ENCODE measurements at regions of chrX and their contacts with region 1.

Region 1: GRCh38 chrX:12974796-12975669 is at the start of gene TMSB4X:
- DNase-seq: peak; percentile 89
- ATAC-seq: peak; percentile 59
- H3K4me3 ChIP-seq: peak within 1 kb of the TSS; percentile 85 to 93 (median 89)
- H3K4me3 Mint-ChIP-seq: peak within 1 kb of the TSS; percentile 99
- H3K27ac ChIP-seq: peak within 1 kb of the TSS; percentile 84 to 86
- H3K27ac Mint-ChIP-seq: peak within 1 kb of the TSS; percentile 98
- H3K4me1 ChIP-seq: peaks cover 49 to 52% of the 10 kb centered on the region in 2 donors
- H3K4me1 Mint-ChIP-seq: peaks cover 60% of the 10 kb centered on the region
- H3K27me3 ChIP-seq: no peaks in the 10 kb centered on the region
- H3K27me3 Mint-ChIP-seq: no peaks in the 10 kb centered on the region
- CTCF ChIP-seq: no peak
- total RNA-seq, gene TMSB4X: 2,468 and 2,550 TPM in 2 replicates

Region 2: GRCh38 chrX:12955882-12956703 is 18.9 kb before region 1 on chrX:
- CTCF ChIA-PET with region 1: interaction called, 214 read pairs
- POLR2A ChIA-PET with region 1: interaction called, 136 read pairs
- intact Hi-C with region 1: loop called (anchors 1 kb)
- DNase-seq: peak; percentile 78
- ATAC-seq: peak; percentile 46
- H3K4me3 ChIP-seq: peak overlapping the region; percentile 33 to 52 (median 38)
- H3K4me3 Mint-ChIP-seq: peak overlapping the region; percentile 90
- H3K27ac ChIP-seq: peak overlapping the region; percentile 95
- H3K27ac Mint-ChIP-seq: peak overlapping the region; percentile 98
- H3K4me1 ChIP-seq: peaks cover 84 to 91% of the 10 kb centered on the region in 2 donors
- H3K4me1 Mint-ChIP-seq: peaks cover 70% of the 10 kb centered on the region
- H3K27me3 ChIP-seq: no peaks in the 10 kb centered on the region
- H3K27me3 Mint-ChIP-seq: no peaks in the 10 kb centered on the region
- CTCF ChIP-seq: no peak

Region 3: DNA sequence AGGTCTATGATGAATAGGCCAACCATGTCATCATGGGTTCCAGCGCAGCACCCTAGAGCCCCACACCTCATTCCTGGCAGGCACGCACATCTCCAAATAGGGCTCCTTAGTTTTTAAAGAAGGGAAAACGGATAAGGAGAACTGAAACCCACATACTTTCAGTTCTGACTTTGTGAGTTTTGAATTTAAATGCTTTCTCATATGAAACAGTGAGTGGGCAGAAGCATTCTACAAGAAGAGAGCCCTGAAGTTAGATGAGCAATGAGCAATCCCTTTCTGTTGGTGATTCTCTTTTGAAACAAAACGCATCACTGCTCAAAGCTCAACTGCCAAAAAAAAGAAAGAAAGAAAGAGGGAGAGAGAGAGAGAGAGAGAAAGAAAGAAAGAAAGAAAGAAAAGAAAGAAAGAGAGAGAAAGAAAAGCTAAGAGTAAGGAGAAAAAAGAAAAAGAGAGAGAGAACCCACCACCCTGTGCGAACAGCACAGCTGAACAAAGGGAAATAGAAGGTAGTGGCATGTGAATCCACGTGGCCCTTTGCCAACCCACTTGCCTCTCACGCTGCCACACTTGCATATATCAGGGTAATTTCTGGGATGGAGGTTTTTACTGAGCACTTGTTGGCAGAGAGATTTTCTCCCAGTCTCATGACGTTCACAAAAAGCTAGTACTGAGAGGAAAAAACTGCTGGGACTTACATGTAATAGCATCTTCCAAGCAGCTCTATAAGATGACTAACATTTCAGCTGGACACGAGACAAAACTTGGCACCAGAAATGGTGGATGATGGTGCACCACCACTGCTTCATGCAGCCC is 30.8 kb after region 1 on chrX:
- CTCF ChIA-PET with region 1: interaction called, 21 read pairs
- POLR2A ChIA-PET with region 1: interaction called, 10 read pairs
- intact Hi-C with region 1: no loop called
- DNase-seq: peak; percentile 59
- ATAC-seq: peak; percentile 66
- H3K4me3 ChIP-seq: peak overlapping the region in 2 of 5 experiments; percentile 1 to 36
- H3K4me3 Mint-ChIP-seq: peak overlapping the region; percentile 82
- H3K27ac ChIP-seq: peak overlapping the region; percentile 51 to 52
- H3K27ac Mint-ChIP-seq: peak overlapping the region; percentile 89
- H3K4me1 ChIP-seq: peaks cover 82 to 85% of the 10 kb centered on the region in 2 donors
- H3K4me1 Mint-ChIP-seq: peaks cover 77% of the 10 kb centered on the region
- H3K27me3 ChIP-seq: peaks cover 0 to 5% (median 0%) of the 10 kb centered on the region in 4 experiments
- H3K27me3 Mint-ChIP-seq: no peaks in the 10 kb centered on the region
- CTCF ChIP-seq: no peak

Region 4: GRCh38 chrX:13254076-13254785 is 279.2 kb after region 1 on chrX:
- CTCF ChIA-PET with region 1: no interaction called
- POLR2A ChIA-PET with region 1: interaction called, 4 read pairs
- intact Hi-C with region 1: loop called (anchors 10 kb)
- DNase-seq: peak; percentile 23
- ATAC-seq: no peak
- H3K4me3 ChIP-seq: no peak overlapping the region
- H3K4me3 Mint-ChIP-seq: peak overlapping the region; percentile 40
- H3K27ac ChIP-seq: peak overlapping the region; percentile 16 to 38
- H3K27ac Mint-ChIP-seq: peak overlapping the region; percentile 54
- H3K4me1 ChIP-seq: peaks cover 54 to 66% of the 10 kb centered on the region in 2 donors
- H3K4me1 Mint-ChIP-seq: peaks cover 64% of the 10 kb centered on the region
- H3K27me3 ChIP-seq: no peaks in the 10 kb centered on the region
- H3K27me3 Mint-ChIP-seq: no peaks in the 10 kb centered on the region
- CTCF ChIP-seq: no peak

Region 5: DNA sequence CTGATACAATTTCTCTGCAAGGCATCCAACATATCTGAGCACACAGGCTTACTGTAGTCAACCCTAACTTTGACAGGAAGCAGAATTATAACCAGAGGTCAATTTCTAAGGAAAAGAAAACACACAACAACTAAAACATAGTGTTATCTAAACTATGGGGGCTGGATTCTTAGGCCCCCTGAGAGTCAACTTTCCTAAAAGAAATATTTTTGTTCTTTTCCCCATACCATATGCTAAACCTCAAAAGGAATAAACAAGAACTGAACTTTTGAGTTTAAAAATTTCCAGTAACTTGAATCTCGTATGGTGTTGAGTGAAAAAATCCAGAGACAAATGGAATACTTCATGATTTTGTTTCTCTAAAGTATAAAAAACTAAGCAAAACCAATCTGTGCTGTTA is 302.0 kb after region 1 on chrX:
- CTCF ChIA-PET with region 1: no interaction called
- POLR2A ChIA-PET with region 1: no interaction called
- intact Hi-C with region 1: no loop called
- DNase-seq: no peak
- ATAC-seq: no peak
- H3K4me3 ChIP-seq: no peak overlapping the region
- H3K4me3 Mint-ChIP-seq: no peak overlapping the region
- H3K27ac ChIP-seq: no peak overlapping the region
- H3K27ac Mint-ChIP-seq: no peak overlapping the region
- H3K4me1 ChIP-seq: no peaks in the 10 kb centered on the region
- H3K4me1 Mint-ChIP-seq: no peaks in the 10 kb centered on the region
- H3K27me3 ChIP-seq: no peaks in the 10 kb centered on the region
- H3K27me3 Mint-ChIP-seq: no peaks in the 10 kb centered on the region
- CTCF ChIP-seq: no peak

Region 6: GRCh38 chrX:13487731-13488523 is 512.9 kb after region 1 on chrX:
- CTCF ChIA-PET with region 1: interaction called, 32 read pairs
- POLR2A ChIA-PET with region 1: interaction called, 10 read pairs
- intact Hi-C with region 1: no loop called
- DNase-seq: peak; percentile 70
- ATAC-seq: no peak
- H3K4me3 ChIP-seq: no peak overlapping the region
- H3K4me3 Mint-ChIP-seq: peak overlapping the region; percentile 56
- H3K27ac ChIP-seq: peak overlapping the region; percentile 84 to 90
- H3K27ac Mint-ChIP-seq: peak overlapping the region; percentile 91
- H3K4me1 ChIP-seq: peaks cover 18 to 22% of the 10 kb centered on the region in 2 donors
- H3K4me1 Mint-ChIP-seq: peaks cover 22% of the 10 kb centered on the region
- H3K27me3 ChIP-seq: peaks cover 0 to 4% (median 0%) of the 10 kb centered on the region in 4 experiments
- H3K27me3 Mint-ChIP-seq: no peaks in the 10 kb centered on the region
- CTCF ChIP-seq: peak; percentile 63

Measured in B cell (primary cell).